ENCODE measurements at regions of chr15 and their contacts with region 1.

Region 1: GRCh38 chr15:77591968-77592613 is 40.6 kb downstream of the LINGO1 start:
- DNase-seq: no peak
- H3K4me3 ChIP-seq: no peak overlapping the region
- H3K27ac ChIP-seq: no peak overlapping the region
- H3K4me1 ChIP-seq: peaks cover 0 to 4% (median 0%) of the 10 kb centered on the region in 4 experiments; a peak in 1 of 7 replicates
- H3K27me3 ChIP-seq: no peaks in the 10 kb centered on the region; a peak in 1 of 7 replicates
- CTCF ChIP-seq: no peak
- EP300 ChIP-seq: no peak
- POLR2A ChIP-seq: no peak
- RAD21 ChIP-seq: no peak

Region 2: GRCh38 chr15:77013776-77014131 is 578.3 kb before region 1 on chr15:
- CTCF ChIA-PET with region 1: no interaction called
- POLR2A ChIA-PET with region 1: no interaction called
- DNase-seq: no peak
- H3K4me3 ChIP-seq: no peak overlapping the region
- H3K27ac ChIP-seq: no peak overlapping the region
- H3K4me1 ChIP-seq: peaks cover 0 to 4% (median 0%) of the 10 kb centered on the region in 4 experiments; a peak in 1 of 7 replicates
- H3K27me3 ChIP-seq: no peaks in the 10 kb centered on the region
- CTCF ChIP-seq: no peak
- EP300 ChIP-seq: no peak
- POLR2A ChIP-seq: no peak
- RAD21 ChIP-seq: no peak

Region 3: DNA sequence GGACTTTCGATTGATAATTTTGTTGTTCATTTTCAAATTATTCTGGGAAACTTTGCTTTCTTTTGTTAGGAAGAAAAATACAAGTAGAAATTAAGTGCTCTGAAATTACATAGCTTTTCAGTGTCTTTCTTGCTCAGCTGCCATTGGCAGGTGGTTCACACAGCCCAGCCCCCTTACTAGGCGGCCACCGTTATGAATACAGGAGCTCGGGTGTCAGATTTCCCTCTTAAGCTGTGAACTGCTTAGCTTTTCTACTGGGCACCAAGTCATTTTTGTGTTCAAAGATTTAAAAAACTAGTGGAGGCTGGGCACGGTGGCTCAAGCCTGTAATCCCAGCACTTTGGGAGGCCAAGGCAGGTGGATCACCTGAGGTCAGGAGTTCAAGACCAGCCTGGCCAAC is 116.2 kb before region 1 on chr15:
- CTCF ChIA-PET with region 1: no interaction called
- POLR2A ChIA-PET with region 1: no interaction called
- DNase-seq: no peak
- H3K4me3 ChIP-seq: no peak overlapping the region
- H3K27ac ChIP-seq: no peak overlapping the region
- H3K4me1 ChIP-seq: peaks cover 0 to 2% (median 0%) of the 10 kb centered on the region in 4 experiments; a peak in 3 of 7 replicates
- H3K27me3 ChIP-seq: no peaks in the 10 kb centered on the region
- CTCF ChIP-seq: no peak
- EP300 ChIP-seq: no peak
- POLR2A ChIP-seq: no peak
- RAD21 ChIP-seq: no peak

Region 4: GRCh38 chr15:77577366-77577950 is 14.6 kb before region 1 on chr15:
- CTCF ChIA-PET with region 1: interaction called, 16 read pairs
- POLR2A ChIA-PET with region 1: interaction called, 4 read pairs
- DNase-seq: no peak
- H3K4me3 ChIP-seq: no peak overlapping the region
- H3K27ac ChIP-seq: no peak overlapping the region
- H3K4me1 ChIP-seq: peaks cover 0 to 1% (median 0%) of the 10 kb centered on the region in 4 experiments; a peak in 2 of 7 replicates
- H3K27me3 ChIP-seq: no peaks in the 10 kb centered on the region
- CTCF ChIP-seq: no peak
- EP300 ChIP-seq: no peak
- POLR2A ChIP-seq: no peak
- RAD21 ChIP-seq: no peak

Region 5: DNA sequence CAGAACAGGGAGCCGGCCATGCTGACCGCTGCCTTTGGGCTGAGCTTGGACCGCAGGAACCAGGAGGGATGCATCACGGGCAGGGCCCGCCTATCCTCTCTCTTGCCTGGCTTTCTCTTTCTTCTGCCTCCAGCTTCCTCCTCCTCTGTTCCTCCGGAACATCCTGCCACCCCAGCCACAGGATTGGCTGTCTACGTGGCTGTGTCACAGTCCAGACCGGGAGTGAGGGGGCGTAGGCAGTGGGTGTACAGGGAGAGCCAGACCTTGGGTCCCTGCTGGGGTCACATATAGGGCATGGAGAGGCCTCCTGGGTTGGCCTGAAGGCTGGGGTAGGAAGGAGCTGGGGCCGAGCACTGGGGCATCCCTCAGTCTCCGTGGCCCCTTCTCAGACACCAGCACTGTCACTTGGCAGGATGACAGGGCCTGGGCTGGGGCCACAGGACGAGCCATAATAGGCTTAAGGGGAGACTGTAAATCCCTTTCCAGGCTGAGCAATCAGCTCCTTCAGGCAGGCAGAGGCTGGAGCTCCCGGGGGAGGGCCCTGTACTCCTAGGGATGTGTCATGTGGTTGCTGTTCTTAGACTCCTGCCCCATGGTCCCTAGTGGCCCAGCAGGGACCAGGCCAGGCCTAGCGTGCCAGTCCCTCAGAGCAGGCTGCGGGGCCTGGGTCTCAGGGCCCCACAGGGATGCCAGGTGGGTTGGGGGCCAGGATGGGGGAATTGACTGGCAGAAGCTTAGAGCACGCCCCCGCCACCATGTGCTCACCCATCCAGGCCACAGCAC is 15.2 kb after region 1 on chr15:
- CTCF ChIA-PET with region 1: interaction called, 18 read pairs
- POLR2A ChIA-PET with region 1: interaction called, 5 read pairs
- DNase-seq: no peak
- H3K4me3 ChIP-seq: no peak overlapping the region
- H3K27ac ChIP-seq: no peak overlapping the region
- H3K4me1 ChIP-seq: peaks cover 4 to 41% (median 22%) of the 10 kb centered on the region in 4 experiments
- H3K27me3 ChIP-seq: no peaks in the 10 kb centered on the region
- CTCF ChIP-seq: no peak
- EP300 ChIP-seq: no peak
- POLR2A ChIP-seq: no peak
- RAD21 ChIP-seq: no peak